T-cell (primary cell): ENCODE measurements at regions of chr11 and their contacts with region 1.

Region 1: GRCh38 chr11:128506999-128507611 is 80.3 kb downstream of the ETS1 start:
- DNase-seq: peak in 12 of 35 experiments; percentile 28 to 59 (median 48)
- ATAC-seq: peak; percentile 7 to 26 (median 18)
- H3K4me3 ChIP-seq: peak overlapping the region; percentile 48 to 67
- H3K4me3 Mint-ChIP-seq: peak overlapping the region; percentile 82 to 99 (median 98)
- H3K27ac ChIP-seq: peak overlapping the region; percentile 78
- H3K27ac Mint-ChIP-seq: peak overlapping the region; percentile 96 to 98
- H3K4me1 ChIP-seq: peaks cover 85 to 88% of the 10 kb centered on the region in 2 experiments
- H3K4me1 Mint-ChIP-seq: peaks cover 97 to 100% (median 99%) of the 10 kb centered on the region in 3 donors
- H3K27me3 ChIP-seq: no peaks in the 10 kb centered on the region
- H3K27me3 Mint-ChIP-seq: no peaks in the 10 kb centered on the region

Region 2: GRCh38 chr11:128290106-128290840 is 216.8 kb before region 1 on chr11:
- CTCF ChIA-PET with region 1: interaction called in 1 of 2 experiments, 23 read pairs
- POLR2A ChIA-PET with region 1: interaction called, 4 to 13 read pairs
- DNase-seq: peak; percentile 55 to 94 (median 67)
- ATAC-seq: peak; percentile 71 to 75 (median 72)
- H3K4me3 ChIP-seq: peak overlapping the region; percentile 54 to 60
- H3K4me3 Mint-ChIP-seq: peak overlapping the region; percentile 87 to 91 (median 91)
- H3K27ac ChIP-seq: peak overlapping the region; percentile 99
- H3K27ac Mint-ChIP-seq: peak overlapping the region; percentile 98 to 100
- H3K4me1 ChIP-seq: peaks cover 58 to 67% of the 10 kb centered on the region in 2 experiments
- H3K4me1 Mint-ChIP-seq: peaks cover 93 to 100% (median 98%) of the 10 kb centered on the region in 3 donors
- H3K27me3 ChIP-seq: no peaks in the 10 kb centered on the region
- H3K27me3 Mint-ChIP-seq: no peaks in the 10 kb centered on the region

Region 3: GRCh38 chr11:128472128-128473089 is 34.7 kb before region 1 on chr11:
- CTCF ChIA-PET with region 1: interaction called, 3 to 9 read pairs
- POLR2A ChIA-PET with region 1: interaction called, 8 to 12 read pairs
- DNase-seq: peak in 4 of 35 experiments; percentile 42 to 70 (median 52)
- ATAC-seq: peak; percentile 12 to 43 (median 30)
- H3K4me3 ChIP-seq: peak overlapping the region; percentile 18 to 42
- H3K4me3 Mint-ChIP-seq: peak overlapping the region; percentile 62 to 99 (median 66)
- H3K27ac ChIP-seq: peak overlapping the region; percentile 96
- H3K27ac Mint-ChIP-seq: peak overlapping the region; percentile 93 to 98
- H3K4me1 ChIP-seq: peaks cover 83 to 86% of the 10 kb centered on the region in 2 experiments
- H3K4me1 Mint-ChIP-seq: peaks cover 100% of the 10 kb centered on the region in 3 donors
- H3K27me3 ChIP-seq: no peaks in the 10 kb centered on the region
- H3K27me3 Mint-ChIP-seq: no peaks in the 10 kb centered on the region

Region 4: DNA sequence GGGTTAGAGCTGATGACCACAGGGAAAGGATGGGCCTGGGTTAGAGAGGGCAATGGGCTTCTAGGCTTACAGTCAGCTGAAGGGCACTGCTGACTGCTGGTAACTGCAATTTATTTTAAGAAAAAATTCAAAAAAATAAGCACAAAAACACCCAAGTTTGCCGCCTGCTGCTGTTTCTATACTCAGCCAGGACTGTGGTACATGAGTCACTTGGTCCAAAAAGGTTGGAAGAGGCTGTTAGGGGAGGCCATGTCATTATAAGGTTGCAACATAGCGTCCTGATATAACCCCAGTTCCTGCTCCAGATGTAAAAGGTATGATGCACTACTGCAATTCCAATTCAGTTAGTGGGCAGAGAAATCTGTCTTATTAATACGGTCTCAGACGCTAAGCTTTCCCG is 18.6 kb before region 1 on chr11:
- CTCF ChIA-PET with region 1: interaction called, 13 to 30 read pairs
- POLR2A ChIA-PET with region 1: interaction called, 13 to 15 read pairs
- DNase-seq: no peak
- ATAC-seq: peak in 3 of 4 experiments; percentile 44 to 54 (median 46)
- H3K4me3 ChIP-seq: peak overlapping the region in 1 of 2 donors; percentile 35
- H3K4me3 Mint-ChIP-seq: peak overlapping the region; percentile 17 to 99 (median 32)
- H3K27ac ChIP-seq: peak overlapping the region; percentile 78
- H3K27ac Mint-ChIP-seq: peak overlapping the region; percentile 92 to 96
- H3K4me1 ChIP-seq: peaks cover 86 to 91% of the 10 kb centered on the region in 2 experiments
- H3K4me1 Mint-ChIP-seq: peaks cover 98 to 100% (median 98%) of the 10 kb centered on the region in 3 donors
- H3K27me3 ChIP-seq: no peaks in the 10 kb centered on the region
- H3K27me3 Mint-ChIP-seq: no peaks in the 10 kb centered on the region